ENCODE measurements at regions of chr2 and their contacts with region 1.

Region 1: GRCh38 chr2:16665748-16666448 is at the start of gene CYRIA:
- DNase-seq: peak; percentile 43 to 94 (median 64)

Region 2: GRCh38 chr2:16617282-16618261 is 48.3 kb before region 1 on chr2:
- intact Hi-C with region 1: loop called (anchors 5 kb)
- DNase-seq: peak in 3 of 10 donors; percentile 36 to 89 (median 45)

Region 3: DNA sequence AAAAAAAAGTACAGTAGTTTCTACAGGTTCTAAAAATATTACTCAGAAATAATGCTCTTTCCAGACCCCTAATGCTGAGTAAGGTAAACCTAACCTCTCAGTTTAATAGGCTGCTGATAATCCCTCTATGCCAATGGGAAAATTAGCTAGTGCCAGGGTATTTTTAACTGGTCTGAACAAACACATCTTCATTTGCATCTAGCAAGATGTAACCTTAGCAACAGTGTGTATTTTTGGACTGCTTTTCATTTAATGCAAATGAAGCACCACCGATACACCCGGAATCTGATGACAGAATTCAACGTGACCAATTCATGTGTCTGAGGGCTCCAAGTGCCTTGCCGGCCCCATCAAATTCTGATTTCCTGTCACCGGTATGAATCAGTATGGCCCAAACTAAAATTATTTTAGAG is 47.1 kb after region 1 on chr2:
- intact Hi-C with region 1: loop called (anchors 10 kb)
- DNase-seq: peak in 2 of 10 donors; percentile 33 to 77

Region 4: DNA sequence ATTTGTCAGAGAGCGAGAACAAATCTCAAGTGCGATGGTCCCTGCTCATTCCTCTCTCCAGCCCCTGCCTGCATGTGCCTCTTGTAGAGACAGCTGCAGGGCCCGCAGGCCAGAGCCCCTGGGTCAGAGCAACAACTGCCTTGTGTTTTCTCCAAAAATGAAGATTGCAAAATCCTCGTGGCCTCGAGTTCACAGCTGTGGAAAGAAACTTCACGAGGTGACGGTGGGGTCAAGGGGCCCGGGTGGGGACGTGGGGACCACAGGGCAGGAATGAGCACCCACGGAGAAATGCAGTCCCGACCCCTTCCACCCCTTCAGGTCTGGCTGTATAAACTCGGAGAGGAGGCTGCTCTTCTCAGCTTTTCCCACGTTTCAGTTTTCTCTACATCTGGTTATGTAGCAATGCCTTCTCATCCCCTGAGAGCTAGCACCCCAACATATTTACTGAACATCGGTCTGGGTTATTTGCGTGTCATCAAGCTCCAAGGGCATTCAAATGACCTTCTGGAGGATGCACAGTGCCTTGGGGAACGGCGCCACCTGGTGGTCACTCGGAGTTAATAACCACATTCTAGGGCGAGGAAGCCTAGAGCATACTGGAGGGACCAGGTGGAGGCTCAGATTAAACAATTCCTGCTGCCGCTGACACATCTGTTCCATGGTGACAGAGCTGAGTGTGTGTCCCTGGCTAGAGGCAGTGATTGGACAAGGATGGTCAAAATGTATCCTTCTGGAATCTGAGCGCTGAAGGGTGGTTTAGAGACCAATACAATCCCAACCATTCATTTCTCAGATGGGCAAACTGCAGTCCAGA is 91.1 kb after region 1 on chr2:
- intact Hi-C with region 1: loop called (anchors 10 kb)
- DNase-seq: peak; percentile 77 to 98 (median 88)